Activated naive CD4-positive, alpha-beta T cell treated with anti-CD3 and anti-CD28 coated beads for 36 hours (primary cell): ENCODE measurements at regions of chr19 and their contacts with region 1.

Region 1: GRCh38 chr19:13104360-13104847 is 1.7 kb upstream of the LYL1 start:
- DNase-seq: peak; percentile 72
- H3K4me3 Mint-ChIP-seq: peak overlapping the region; percentile 84
- H3K27ac Mint-ChIP-seq: peak overlapping the region; percentile 91
- H3K4me1 Mint-ChIP-seq: peaks cover 33% of the 10 kb centered on the region
- H3K27me3 Mint-ChIP-seq: no peaks in the 10 kb centered on the region

Region 2: GRCh38 chr19:12782229-12783028 is 322.0 kb before region 1 on chr19:
- CTCF ChIA-PET with region 1: no interaction called
- intact Hi-C with region 1: loop called (anchors 5 kb)
- DNase-seq: peak; percentile 93
- H3K4me3 Mint-ChIP-seq: peak overlapping the region; percentile 74
- H3K27ac Mint-ChIP-seq: peak overlapping the region; percentile 93
- H3K4me1 Mint-ChIP-seq: peaks cover 33% of the 10 kb centered on the region
- H3K27me3 Mint-ChIP-seq: no peaks in the 10 kb centered on the region

Region 3: DNA sequence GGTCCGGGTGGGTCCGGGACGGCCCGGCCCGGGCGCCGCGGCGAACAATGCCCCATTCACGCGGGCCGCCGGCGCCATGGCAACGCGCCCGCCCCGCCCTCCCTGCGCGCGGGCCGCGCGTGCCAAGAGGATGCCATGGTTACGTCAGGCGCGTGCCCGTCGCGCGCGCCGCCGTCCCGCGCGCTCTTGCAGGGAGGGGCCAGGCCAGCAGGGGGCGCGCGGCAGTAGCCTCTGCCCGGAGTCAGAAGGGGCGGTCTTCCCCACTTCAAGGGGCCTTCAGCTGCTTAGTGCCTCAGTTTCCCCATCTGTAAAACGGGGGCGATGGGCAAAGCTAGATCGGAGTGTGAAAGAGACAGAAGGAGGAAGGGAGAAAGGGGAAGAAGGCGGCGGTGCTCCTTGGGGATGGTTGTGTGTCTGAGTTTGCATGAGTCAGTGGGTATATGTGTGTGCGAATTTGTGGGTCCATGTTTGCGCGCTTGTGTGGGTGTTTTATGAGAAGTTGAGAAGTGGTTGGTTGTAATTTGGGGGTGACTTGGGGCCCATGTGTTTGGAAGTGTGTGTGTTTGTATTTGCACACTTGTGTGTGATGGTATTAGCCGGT is 120.8 kb before region 1 on chr19:
- CTCF ChIA-PET with region 1: interaction called, 22 read pairs
- intact Hi-C with region 1: no loop called
- DNase-seq: peak; percentile 81
- H3K4me3 Mint-ChIP-seq: no peak overlapping the region
- H3K27ac Mint-ChIP-seq: no peak overlapping the region
- H3K4me1 Mint-ChIP-seq: no peaks in the 10 kb centered on the region
- H3K27me3 Mint-ChIP-seq: no peaks in the 10 kb centered on the region

Region 4: DNA sequence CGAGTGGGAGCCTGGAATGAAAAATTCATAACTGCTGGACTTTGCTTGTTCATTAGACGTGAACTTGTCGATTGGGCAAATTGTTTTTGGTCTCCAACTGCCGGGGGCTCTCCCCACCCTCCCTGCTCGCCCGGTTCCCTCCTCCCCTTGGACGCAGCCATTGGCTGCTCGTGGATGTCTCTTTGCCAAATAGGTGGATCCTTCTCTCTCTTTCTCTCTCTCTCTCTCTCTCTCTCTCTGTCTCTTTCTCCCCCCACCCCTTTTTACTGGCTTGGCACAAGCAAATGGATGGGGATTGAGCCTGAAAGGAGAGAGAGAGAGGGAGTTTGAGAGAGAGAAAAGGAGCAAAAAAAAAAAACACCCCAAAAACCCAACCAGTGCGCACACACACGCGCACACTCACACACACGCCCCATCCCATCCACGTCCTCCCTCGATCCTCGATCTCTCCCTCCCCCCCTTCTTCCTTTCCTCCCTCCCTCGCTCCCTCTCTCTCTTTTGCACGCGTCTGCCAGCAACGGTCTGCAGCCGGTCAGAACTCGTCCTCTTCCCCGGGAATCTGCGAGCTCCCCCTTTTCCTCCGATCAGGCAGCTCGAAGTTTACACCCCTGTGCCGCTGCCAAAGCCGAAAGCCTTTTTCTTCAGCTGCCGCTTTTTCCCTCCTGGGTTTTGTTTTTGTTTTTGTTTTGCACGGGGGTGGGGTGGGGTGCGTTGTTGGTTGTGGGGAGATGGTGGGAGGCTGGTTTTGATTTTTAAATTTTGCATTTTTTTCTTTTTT is 81.4 kb before region 1 on chr19:
- CTCF ChIA-PET with region 1: interaction called, 11 read pairs
- intact Hi-C with region 1: no loop called
- DNase-seq: peak; percentile 44
- H3K4me3 Mint-ChIP-seq: peak overlapping the region; percentile 70
- H3K27ac Mint-ChIP-seq: no peak overlapping the region
- H3K4me1 Mint-ChIP-seq: peaks cover 22% of the 10 kb centered on the region
- H3K27me3 Mint-ChIP-seq: peaks cover 7% of the 10 kb centered on the region

Region 5: DNA sequence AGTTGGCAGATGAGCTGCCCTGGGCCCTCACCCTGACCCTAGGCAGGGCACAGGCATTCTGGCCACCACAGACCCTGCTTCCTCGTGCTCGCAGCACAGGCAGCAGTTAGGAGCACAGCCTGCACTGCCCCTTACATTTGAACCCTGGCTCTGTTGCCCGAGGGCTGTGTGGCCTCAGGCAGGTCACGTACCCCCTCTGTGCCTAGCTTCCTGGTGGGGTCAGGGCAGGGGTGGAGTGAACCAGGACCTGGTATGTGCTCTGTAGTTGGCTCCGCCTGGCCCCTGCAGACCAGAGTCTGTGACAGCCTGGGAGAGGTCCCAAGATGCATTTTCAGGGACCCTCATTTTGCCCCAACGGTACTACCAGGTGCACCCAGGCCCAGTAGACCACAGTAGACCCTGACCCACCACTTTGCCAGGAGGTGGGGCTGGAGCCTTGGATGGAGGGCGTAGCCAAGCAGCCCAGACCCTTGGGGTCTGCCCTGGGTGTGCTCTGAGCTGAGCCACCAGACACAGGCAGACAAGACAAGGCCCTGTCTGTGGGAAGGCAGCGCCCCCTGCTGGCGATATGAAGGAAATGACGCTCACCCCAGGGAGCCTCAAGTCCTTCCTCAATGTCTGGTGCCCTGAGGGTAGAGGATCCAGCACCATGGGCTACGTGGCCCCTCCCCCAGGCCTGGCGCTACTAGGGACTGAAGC is 10.8 kb before region 1 on chr19:
- CTCF ChIA-PET with region 1: interaction called, 25 read pairs
- intact Hi-C with region 1: no loop called
- DNase-seq: peak; percentile 90
- H3K4me3 Mint-ChIP-seq: no peak overlapping the region
- H3K27ac Mint-ChIP-seq: no peak overlapping the region
- H3K4me1 Mint-ChIP-seq: peaks cover 21% of the 10 kb centered on the region
- H3K27me3 Mint-ChIP-seq: peaks cover 29% of the 10 kb centered on the region

Region 6: DNA sequence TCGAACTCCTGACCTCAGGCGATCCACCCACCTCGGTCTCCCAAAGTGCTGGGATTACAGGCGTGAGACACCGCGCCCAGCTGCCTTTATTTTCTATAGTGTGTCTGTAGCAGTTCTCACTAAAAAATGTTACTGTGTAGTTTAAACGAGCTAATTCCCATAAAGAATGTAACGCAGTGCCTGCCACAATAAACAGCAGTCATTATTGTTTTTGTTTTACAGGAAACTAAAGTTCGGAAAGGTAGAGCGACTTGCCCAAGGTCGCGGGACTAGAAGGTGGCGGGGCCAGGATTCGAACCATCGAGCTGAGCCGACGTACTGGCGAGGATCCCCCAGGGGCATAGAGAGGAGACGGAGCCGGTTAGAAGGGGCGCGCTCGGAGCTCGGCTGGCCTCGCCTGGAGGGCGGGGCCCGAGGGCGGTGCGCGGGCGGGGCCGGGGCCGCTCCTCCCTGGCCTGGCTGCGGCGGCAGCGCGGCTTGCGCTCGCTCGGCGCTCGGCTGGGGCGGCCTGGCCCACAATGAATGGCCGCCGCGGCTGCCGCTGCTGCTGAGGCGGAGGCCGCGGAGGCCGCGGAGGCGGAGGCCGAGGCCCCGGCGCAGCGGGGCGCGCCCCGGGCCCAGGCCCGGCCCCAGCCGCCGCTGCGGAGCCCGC is 13.5 kb after region 1 on chr19 and contains the start of gene NACC1:
- CTCF ChIA-PET with region 1: interaction called, 24 read pairs
- intact Hi-C with region 1: loop called (anchors 1 kb)
- DNase-seq: peak; percentile 89
- H3K4me3 Mint-ChIP-seq: peak within 1 kb of the TSS; percentile 97
- H3K27ac Mint-ChIP-seq: peak within 1 kb of the TSS; percentile 91
- H3K4me1 Mint-ChIP-seq: peaks cover 49% of the 10 kb centered on the region
- H3K27me3 Mint-ChIP-seq: no peaks in the 10 kb centered on the region
- total RNA-seq, gene NACC1: 41.3 to 45.0 TPM